HepG2 (cell line): ENCODE measurements at regions of chr10 and their contacts with region 1.

Region 1: DNA sequence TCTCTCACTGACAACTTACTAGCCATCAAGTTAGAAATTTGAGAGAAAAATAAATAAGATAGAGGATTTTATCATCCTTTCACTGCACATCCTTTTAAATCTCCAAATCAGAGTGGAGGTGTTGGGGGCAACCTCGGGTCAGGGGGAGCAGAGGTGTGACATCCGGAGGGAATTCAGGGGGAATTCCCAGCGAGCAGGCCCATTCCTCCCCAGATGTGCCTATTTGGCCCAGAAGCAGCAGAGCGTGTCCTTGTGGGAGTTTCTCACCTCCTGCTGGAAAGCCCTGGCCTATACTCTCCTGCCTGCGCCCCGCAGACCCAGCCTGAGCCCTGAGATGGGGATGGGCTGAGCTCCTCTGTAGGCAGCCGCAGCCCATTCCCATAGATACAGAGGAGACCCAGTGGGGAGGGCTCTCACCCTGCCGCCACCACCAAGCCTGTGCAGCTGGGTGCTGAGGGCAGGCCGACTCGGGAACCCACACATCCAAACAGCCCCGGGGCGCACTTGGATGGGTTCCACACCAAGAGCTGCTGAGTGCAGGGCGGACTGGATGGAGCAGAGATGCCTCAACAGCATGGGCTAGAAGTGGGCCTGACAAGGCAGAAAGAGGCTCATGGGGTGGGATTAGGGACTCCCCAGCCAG is 124.5 kb downstream of the CXCL12 start:
- DNase-seq: no peak
- ATAC-seq: no peak
- H3K4me3 ChIP-seq: no peak overlapping the region
- H3K27ac ChIP-seq: peak overlapping the region; percentile 98
- H3K4me1 ChIP-seq: peaks cover 65% of the 10 kb centered on the region
- H3K27me3 ChIP-seq: no peaks in the 10 kb centered on the region
- CTCF ChIP-seq: no peak
- EP300 ChIP-seq: no peak
- POLR2A ChIP-seq: no peak
- RAD21 ChIP-seq: no peak

Region 2: GRCh38 chr10:44195112-44196007 is 65.0 kb before region 1 on chr10:
- CTCF ChIA-PET with region 1: no interaction called
- POLR2A ChIA-PET with region 1: no interaction called
- in situ Hi-C with region 1: no loop called
- intact Hi-C with region 1: no loop called
- DNase-seq: peak; percentile 89
- ATAC-seq: peak; percentile 93
- H3K4me3 ChIP-seq: peak overlapping the region; percentile 9 to 59 (median 14); a peak in 2 of 6 replicates
- H3K27ac ChIP-seq: peak overlapping the region; percentile 76
- H3K4me1 ChIP-seq: peaks cover 83% of the 10 kb centered on the region
- H3K27me3 ChIP-seq: no peaks in the 10 kb centered on the region
- CTCF ChIP-seq: no peak
- EP300 ChIP-seq: peak in 1 of 2 experiments; percentile 86; a peak in 1 of 4 replicates
- POLR2A ChIP-seq: no peak
- RAD21 ChIP-seq: no peak

Region 3: GRCh38 chr10:44245601-44245938 is 14.8 kb before region 1 on chr10:
- CTCF ChIA-PET with region 1: no interaction called
- POLR2A ChIA-PET with region 1: interaction called, 11 read pairs
- in situ Hi-C with region 1: no loop called
- intact Hi-C with region 1: loop called (anchors 1 kb)
- DNase-seq: peak; percentile 90
- ATAC-seq: peak; percentile 63
- H3K4me3 ChIP-seq: peak overlapping the region in 1 of 3 experiments; percentile 12; a peak in 1 of 6 replicates
- H3K27ac ChIP-seq: peak overlapping the region; percentile 83
- H3K4me1 ChIP-seq: peaks cover 74% of the 10 kb centered on the region
- H3K27me3 ChIP-seq: no peaks in the 10 kb centered on the region
- CTCF ChIP-seq: no peak
- EP300 ChIP-seq: peak; percentile 60 to 91; a peak in 2 of 4 replicates
- POLR2A ChIP-seq: no peak
- RAD21 ChIP-seq: no peak

Region 4: GRCh38 chr10:44952779-44953231 is 692.4 kb after region 1 on chr10:
- CTCF ChIA-PET with region 1: no interaction called
- POLR2A ChIA-PET with region 1: no interaction called
- in situ Hi-C with region 1: no loop called
- intact Hi-C with region 1: loop called (anchors 5 kb)
- DNase-seq: peak; percentile 92
- ATAC-seq: peak; percentile 75
- H3K4me3 ChIP-seq: no peak overlapping the region
- H3K27ac ChIP-seq: peak overlapping the region; percentile 50
- H3K4me1 ChIP-seq: peaks cover 80% of the 10 kb centered on the region
- H3K27me3 ChIP-seq: no peaks in the 10 kb centered on the region
- CTCF ChIP-seq: no peak
- EP300 ChIP-seq: peak in 1 of 2 experiments; percentile 79; a peak in 1 of 4 replicates
- POLR2A ChIP-seq: 0 out of 4 replicates have a peak, but pooled peaks of 1 of the 2 experiments have one; percentile 24
- RAD21 ChIP-seq: no peak